IMR-90 (cell line): ENCODE measurements at regions of chr4 and their contacts with region 1.

Region 1: GRCh38 chr4:87973283-87974169 is 2.0 kb upstream of the SPP1 start:
- DNase-seq: peak; percentile 84
- ATAC-seq: peak; percentile 90
- H3K4me3 ChIP-seq: peak overlapping the region; percentile 34; the same call in 1 of the 2 replicates
- H3K27ac ChIP-seq: no peak overlapping the region
- H3K4me1 ChIP-seq: no peaks in the 10 kb centered on the region
- H3K27me3 ChIP-seq: peaks cover 5% of the 10 kb centered on the region
- CTCF ChIP-seq: peak; percentile 65
- POLR2A ChIP-seq: no peak
- RAD21 ChIP-seq: peak; percentile 45

Region 2: DNA sequence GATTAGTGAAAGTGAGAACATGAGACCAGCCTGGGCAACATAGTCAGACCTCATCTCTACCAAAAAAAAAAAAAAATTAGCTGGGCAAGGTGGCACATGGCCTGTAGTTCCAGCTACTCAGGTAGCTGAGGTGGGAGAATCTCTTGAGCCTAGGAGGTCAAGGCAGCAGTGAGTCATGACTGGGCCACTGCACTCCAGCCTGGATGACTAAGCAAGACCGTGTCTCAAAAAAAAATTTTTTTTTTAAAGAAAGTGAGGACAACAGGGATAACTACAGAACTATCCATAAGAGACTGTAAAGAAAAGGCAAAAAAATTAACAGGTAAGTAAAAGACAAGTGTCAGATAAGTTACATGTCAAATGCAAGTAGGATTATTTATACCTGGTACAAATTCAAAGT is 11.5 kb before region 1 on chr4:
- CTCF ChIA-PET with region 1: interaction called, 18 read pairs
- POLR2A ChIA-PET with region 1: no interaction called
- dilution Hi-C with region 1: no loop called
- in situ Hi-C with region 1: no loop called
- intact Hi-C with region 1: no loop called
- DNase-seq: peak; percentile 47
- ATAC-seq: peak; percentile 49; the same call in 1 of the 2 replicates
- H3K4me3 ChIP-seq: no peak overlapping the region
- H3K27ac ChIP-seq: no peak overlapping the region
- H3K4me1 ChIP-seq: no peaks in the 10 kb centered on the region
- H3K27me3 ChIP-seq: no peaks in the 10 kb centered on the region
- CTCF ChIP-seq: no peak
- POLR2A ChIP-seq: no peak
- RAD21 ChIP-seq: no peak

Region 3: DNA sequence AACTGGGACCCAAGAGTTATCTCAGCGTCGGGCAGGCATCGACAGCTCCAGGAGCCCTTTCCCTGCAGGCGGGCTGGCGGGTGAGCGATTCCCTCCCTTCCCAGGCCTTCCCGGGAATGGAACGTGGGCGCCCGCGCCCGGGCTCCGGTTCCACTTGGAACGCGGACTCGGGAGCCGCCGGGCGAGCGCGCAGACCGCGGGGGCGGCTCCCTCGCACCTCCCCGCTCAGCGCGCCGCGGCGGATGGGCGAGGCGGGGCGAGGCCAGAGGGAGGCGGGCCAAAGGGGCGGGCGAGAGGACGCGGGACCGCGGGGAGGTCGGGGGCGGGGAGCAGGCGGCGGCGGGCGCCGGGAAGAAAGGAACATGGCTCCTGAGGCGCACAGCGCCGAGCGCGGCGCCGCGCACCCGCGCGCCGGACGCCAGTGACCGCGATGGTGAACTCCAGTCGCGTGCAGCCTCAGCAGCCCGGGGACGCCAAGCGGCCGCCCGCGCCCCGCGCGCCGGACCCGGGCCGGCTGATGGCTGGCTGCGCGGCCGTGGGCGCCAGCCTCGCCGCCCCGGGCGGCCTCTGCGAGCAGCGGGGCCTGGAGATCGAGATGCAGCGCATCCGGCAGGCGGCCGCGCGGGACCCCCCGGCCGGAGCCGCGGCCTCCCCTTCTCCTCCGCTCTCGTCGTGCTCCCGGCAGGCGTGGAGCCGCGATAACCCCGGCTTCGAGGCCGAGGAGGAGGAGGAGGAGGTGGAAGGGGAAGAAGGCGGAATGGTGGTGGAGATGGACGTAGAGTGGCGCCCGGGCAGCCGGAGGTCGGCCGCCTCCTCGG is 34.0 kb after region 1 on chr4 and contains the start of gene PKD2:
- CTCF ChIA-PET with region 1: no interaction called
- POLR2A ChIA-PET with region 1: no interaction called
- dilution Hi-C with region 1: no loop called
- in situ Hi-C with region 1: no loop called
- intact Hi-C with region 1: loop called (anchors 5 kb)
- DNase-seq: peak; percentile 65
- ATAC-seq: peak; percentile 91
- H3K4me3 ChIP-seq: peak within 1 kb of the TSS; percentile 93
- H3K27ac ChIP-seq: peak within 1 kb of the TSS; percentile 85
- H3K4me1 ChIP-seq: peaks cover 13% of the 10 kb centered on the region; the same call in 1 of the 2 replicates
- H3K27me3 ChIP-seq: no peaks in the 10 kb centered on the region
- CTCF ChIP-seq: no peak
- POLR2A ChIP-seq: peak; percentile 61; the same call in 1 of the 2 replicates
- RAD21 ChIP-seq: no peak
- total RNA-seq, gene PKD2: 51.3 and 96.7 TPM in 2 replicates

Region 4: DNA sequence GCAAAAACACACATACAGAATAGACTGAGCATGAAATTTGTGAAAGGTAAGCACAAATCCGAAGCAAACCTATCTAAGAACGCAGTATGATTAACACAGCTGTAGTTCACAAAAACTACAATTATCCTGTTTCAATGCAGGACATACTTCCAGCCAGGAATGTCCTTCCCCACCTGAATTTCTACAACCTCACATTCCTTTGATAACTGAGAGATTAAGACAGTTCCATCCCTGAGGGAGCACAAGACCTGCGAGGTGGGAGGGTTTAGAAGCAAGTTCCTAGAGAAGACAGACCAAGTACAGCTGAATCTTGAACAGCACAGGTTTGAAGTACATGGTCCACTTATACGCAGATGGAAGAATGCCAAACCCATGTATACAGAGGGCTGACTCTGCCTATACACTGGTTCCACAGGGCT is 174.3 kb after region 1 on chr4:
- CTCF ChIA-PET with region 1: no interaction called
- POLR2A ChIA-PET with region 1: no interaction called
- dilution Hi-C with region 1: no loop called
- in situ Hi-C with region 1: no loop called
- intact Hi-C with region 1: no loop called
- DNase-seq: no peak
- ATAC-seq: no peak; the same call in 1 of the 2 replicates
- H3K4me3 ChIP-seq: no peak overlapping the region
- H3K27ac ChIP-seq: no peak overlapping the region
- H3K4me1 ChIP-seq: peaks cover 8% of the 10 kb centered on the region
- H3K27me3 ChIP-seq: no peaks in the 10 kb centered on the region; the same call in 1 of the 2 replicates
- CTCF ChIP-seq: no peak
- POLR2A ChIP-seq: no peak
- RAD21 ChIP-seq: no peak